A673 (cell line): ENCODE measurements at regions of chr3 and their contacts with region 1.

Region 1: DNA sequence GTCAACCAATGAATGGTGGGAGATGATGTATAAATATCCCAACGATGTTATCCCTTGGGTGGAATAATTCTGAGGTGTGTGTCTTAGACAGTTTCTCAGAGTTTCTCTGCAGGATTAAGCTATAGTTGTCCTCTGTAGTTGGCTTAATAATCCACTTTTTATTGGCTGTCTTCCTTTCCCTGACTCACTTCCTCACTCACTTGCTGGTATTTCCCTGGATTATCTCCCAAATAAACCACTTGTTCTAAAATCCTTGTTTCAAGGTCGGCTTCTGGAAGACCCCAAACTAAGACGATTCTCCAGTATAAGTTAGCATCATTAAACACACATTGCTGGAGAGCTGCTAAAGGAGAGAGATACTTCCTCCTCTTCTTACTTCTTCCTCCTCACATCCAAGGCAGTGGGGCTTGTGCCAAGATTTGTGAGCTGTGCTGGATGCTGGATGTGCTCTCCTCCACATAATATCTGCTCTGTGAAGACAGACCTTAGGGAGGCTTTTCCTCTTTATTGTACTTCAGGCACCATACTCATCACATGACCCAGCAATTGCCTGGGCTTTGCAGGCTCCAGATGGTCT is 22.5 kb upstream of the ROPN1 start:
- DNase-seq: no peak
- H3K4me3 ChIP-seq: no peak overlapping the region
- H3K27ac ChIP-seq: no peak overlapping the region
- H3K4me1 ChIP-seq: no peaks in the 10 kb centered on the region
- H3K27me3 ChIP-seq: no peaks in the 10 kb centered on the region
- CTCF ChIP-seq: no peak

Region 2: GRCh38 chr3:124078953-124079911 is 64.8 kb after region 1 on chr3:
- CTCF ChIA-PET with region 1: no interaction called
- POLR2A ChIA-PET with region 1: no interaction called
- intact Hi-C with region 1: loop called (anchors 1 kb)
- DNase-seq: peak; percentile 58
- H3K4me3 ChIP-seq: no peak overlapping the region
- H3K27ac ChIP-seq: no peak overlapping the region
- H3K4me1 ChIP-seq: peaks cover 2% of the 10 kb centered on the region
- H3K27me3 ChIP-seq: no peaks in the 10 kb centered on the region
- CTCF ChIP-seq: peak; percentile 83

Region 3: GRCh38 chr3:124281453-124282316 is 267.2 kb after region 1 on chr3:
- CTCF ChIA-PET with region 1: interaction called, 4 read pairs
- POLR2A ChIA-PET with region 1: no interaction called
- intact Hi-C with region 1: loop called (anchors 5 kb)
- DNase-seq: peak; percentile 24
- H3K4me3 ChIP-seq: no peak overlapping the region
- H3K27ac ChIP-seq: no peak overlapping the region
- H3K4me1 ChIP-seq: no peaks in the 10 kb centered on the region
- H3K27me3 ChIP-seq: no peaks in the 10 kb centered on the region
- CTCF ChIP-seq: peak; percentile 57

Region 4: GRCh38 chr3:124439603-124440002 is 425.1 kb after region 1 on chr3:
- CTCF ChIA-PET with region 1: no interaction called
- POLR2A ChIA-PET with region 1: no interaction called
- intact Hi-C with region 1: no loop called
- DNase-seq: no peak
- H3K4me3 ChIP-seq: no peak overlapping the region
- H3K27ac ChIP-seq: no peak overlapping the region
- H3K4me1 ChIP-seq: no peaks in the 10 kb centered on the region
- H3K27me3 ChIP-seq: no peaks in the 10 kb centered on the region
- CTCF ChIP-seq: no peak

Region 5: GRCh38 chr3:124451630-124452317 is 437.3 kb after region 1 on chr3:
- CTCF ChIA-PET with region 1: no interaction called
- POLR2A ChIA-PET with region 1: no interaction called
- intact Hi-C with region 1: no loop called
- DNase-seq: no peak
- H3K4me3 ChIP-seq: no peak overlapping the region
- H3K27ac ChIP-seq: no peak overlapping the region
- H3K4me1 ChIP-seq: no peaks in the 10 kb centered on the region
- H3K27me3 ChIP-seq: no peaks in the 10 kb centered on the region
- CTCF ChIP-seq: no peak

Region 6: DNA sequence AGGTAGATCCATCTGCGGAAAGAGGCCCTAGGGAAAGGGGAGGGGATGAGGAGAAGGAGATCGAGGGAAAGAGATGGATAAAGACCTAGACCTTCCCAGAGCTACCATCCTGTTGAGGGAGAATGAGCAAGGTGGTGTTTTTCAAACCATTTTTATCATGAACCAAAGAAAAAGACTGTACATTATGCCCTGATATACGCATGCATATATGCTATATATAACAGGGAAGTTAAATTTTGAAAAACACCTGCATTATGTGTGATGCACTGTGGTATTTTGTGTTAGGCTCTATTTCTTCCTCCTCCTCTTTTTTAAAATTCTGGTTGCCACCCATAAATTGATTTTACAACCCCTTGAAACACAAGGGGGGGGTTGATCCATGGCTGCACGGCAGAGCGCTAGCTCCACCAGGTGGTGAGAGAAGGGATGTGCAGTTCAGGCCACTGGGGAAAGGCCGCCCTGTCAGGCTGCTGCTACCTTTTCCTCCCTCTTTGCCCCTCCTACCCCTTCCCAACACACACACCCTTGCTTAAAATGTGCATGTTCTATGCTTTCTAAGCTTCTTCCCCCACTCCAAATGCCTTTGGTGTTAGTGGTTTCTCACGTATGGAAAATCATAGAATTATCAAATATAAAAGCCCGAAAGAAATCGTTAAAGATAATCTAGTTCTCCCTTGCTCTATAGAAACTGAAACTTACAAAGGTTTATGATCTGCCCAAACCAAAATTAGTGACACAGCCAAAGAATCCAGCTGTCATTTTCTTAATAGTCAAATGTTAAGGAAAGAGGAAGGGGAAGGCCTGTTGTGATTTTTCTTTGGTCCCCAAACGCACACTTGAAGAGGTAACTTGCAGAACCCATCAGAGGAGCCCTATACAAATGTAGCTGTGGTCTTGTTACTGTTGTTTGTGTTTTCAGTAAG is 453.8 kb after region 1 on chr3:
- CTCF ChIA-PET with region 1: no interaction called
- POLR2A ChIA-PET with region 1: no interaction called
- intact Hi-C with region 1: loop called (anchors 2 kb)
- DNase-seq: peak; percentile 69
- H3K4me3 ChIP-seq: no peak overlapping the region
- H3K27ac ChIP-seq: no peak overlapping the region
- H3K4me1 ChIP-seq: no peaks in the 10 kb centered on the region
- H3K27me3 ChIP-seq: no peaks in the 10 kb centered on the region
- CTCF ChIP-seq: peak; percentile 99

Region 7: DNA sequence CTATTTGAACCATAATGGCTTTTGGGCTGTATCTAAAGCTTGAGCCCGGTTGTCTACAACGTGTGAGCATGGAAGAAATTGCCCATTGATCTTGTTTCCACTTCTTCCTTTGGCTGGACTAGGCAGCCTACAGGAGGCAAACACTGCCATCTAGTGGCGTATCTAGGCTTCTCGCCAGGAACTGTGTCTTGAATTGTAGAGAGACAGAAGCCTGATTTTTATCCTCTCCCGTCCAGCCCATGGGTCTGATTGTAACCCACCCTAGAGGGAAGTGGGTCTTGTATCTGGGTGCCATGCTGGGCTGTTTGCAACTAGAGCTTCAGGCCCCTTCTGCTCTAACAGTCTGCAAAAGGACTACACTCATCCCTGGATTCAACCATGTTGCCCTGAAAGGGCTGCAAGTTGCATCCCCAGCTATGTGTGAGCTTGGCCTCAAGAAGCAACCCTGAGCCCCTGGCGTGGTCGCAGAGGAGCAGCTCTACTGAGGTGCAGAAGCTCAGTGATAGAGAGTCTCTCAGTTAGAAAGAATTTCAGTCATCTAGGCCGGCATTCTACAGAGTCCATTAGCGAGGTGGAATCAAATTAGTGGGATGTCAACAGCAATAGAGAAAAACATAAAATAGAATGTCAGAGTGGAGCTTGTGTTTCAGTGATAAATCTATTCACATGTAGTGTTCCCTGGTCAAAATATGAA is 545.6 kb after region 1 on chr3:
- CTCF ChIA-PET with region 1: no interaction called
- POLR2A ChIA-PET with region 1: no interaction called
- intact Hi-C with region 1: loop called (anchors 5 kb)
- DNase-seq: peak; percentile 93
- H3K4me3 ChIP-seq: no peak overlapping the region
- H3K27ac ChIP-seq: peak overlapping the region; percentile 73
- H3K4me1 ChIP-seq: peaks cover 35% of the 10 kb centered on the region
- H3K27me3 ChIP-seq: no peaks in the 10 kb centered on the region
- CTCF ChIP-seq: peak; percentile 94